ENCODE measurements at regions of chr6 and their contacts with region 1.

Region 1: DNA sequence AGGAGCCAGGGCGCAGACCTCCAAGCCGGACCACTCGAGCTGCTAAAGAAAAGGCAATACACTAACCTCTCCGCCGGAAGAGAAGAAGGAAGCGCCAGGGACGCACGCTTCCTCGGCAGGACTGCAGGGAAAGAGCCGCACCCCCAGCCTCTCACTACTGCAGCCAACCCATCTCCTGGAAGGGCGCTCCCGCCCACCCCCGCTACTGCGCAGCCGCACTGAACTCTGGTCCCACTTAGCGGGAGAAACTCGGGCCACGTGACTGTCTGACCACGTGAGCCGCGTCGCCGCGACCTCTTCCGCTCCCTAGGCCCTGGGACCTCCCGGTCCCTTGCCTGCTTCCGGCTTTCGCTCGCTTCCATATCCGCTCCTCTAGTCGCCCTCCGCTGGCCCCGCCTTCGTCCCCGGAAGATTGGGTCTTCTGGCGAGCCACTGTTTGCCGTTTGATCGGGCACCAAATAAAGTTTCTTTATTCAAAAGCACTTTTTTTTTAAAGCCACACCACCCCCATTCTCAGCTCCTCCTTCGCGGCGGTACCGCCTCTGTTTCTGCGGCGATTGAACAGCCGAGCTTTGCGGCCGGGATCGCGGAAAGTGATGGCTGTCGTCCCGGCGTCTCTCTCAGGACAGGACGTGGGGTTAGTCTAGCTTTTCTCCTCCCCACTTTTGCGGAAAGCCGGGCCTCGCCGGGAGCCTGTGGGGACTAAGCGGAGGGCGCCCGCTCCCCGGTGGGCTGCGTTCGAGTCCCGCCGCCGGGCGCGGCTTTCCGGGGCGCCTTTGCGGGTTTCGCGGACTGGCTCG is at the start of gene RMND1:
- DNase-seq: peak; percentile 98 to 100 (median 99)
- ATAC-seq: peak; percentile 95
- H3K4me3 ChIP-seq: peak within 1 kb of the TSS; percentile 74 to 81
- H3K4me3 Mint-ChIP-seq: peak within 1 kb of the TSS; percentile 92
- H3K27ac ChIP-seq: peak within 1 kb of the TSS; percentile 75 to 78
- H3K27ac Mint-ChIP-seq: peak within 1 kb of the TSS; percentile 92
- H3K4me1 ChIP-seq: peaks cover 24% of the 10 kb centered on the region
- H3K4me1 Mint-ChIP-seq: peaks cover 48% of the 10 kb centered on the region
- H3K27me3 ChIP-seq: no peaks in the 10 kb centered on the region
- H3K27me3 Mint-ChIP-seq: no peaks in the 10 kb centered on the region
- CTCF ChIP-seq: no peak
- total RNA-seq, gene RMND1: 5.8 to 6.3 TPM

Region 2: GRCh38 chr6:151370509-151371078 is 81.6 kb before region 1 on chr6:
- CTCF ChIA-PET with region 1: no interaction called
- POLR2A ChIA-PET with region 1: interaction called, 8 read pairs
- intact Hi-C with region 1: loop called (anchors 5 kb)
- DNase-seq: peak in 1 of 9 experiments; percentile 34
- ATAC-seq: no peak
- H3K4me3 ChIP-seq: no peak overlapping the region
- H3K4me3 Mint-ChIP-seq: no peak overlapping the region
- H3K27ac ChIP-seq: peak overlapping the region in 1 of 2 experiments; percentile 66
- H3K27ac Mint-ChIP-seq: peak overlapping the region; percentile 4
- H3K4me1 ChIP-seq: peaks cover 39% of the 10 kb centered on the region
- H3K4me1 Mint-ChIP-seq: peaks cover 40% of the 10 kb centered on the region
- H3K27me3 ChIP-seq: no peaks in the 10 kb centered on the region
- H3K27me3 Mint-ChIP-seq: no peaks in the 10 kb centered on the region
- CTCF ChIP-seq: no peak

Region 3: DNA sequence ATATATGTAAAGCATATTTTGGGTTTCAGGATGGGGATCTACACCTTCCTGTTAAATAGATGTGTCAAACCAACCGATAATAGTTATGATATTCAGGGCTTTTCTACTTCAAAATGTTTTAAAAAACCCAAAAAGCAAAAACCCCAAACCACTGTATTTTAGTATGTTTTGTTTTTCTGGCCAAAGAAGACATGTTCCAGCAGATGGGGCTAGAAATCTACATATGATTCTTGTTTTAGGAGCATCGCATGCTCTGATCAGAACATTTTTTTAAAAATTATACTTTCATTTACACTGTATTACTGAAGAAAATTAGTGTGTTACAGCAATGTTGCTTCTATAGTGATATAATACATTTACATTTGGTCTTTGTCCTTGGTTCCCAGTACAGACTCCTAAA is 11.2 kb before region 1 on chr6:
- CTCF ChIA-PET with region 1: interaction called, 11 read pairs
- POLR2A ChIA-PET with region 1: interaction called, 8 read pairs
- intact Hi-C with region 1: no loop called
- DNase-seq: peak in 2 of 9 experiments; percentile 55 to 67
- ATAC-seq: peak; percentile 52
- H3K4me3 ChIP-seq: no peak overlapping the region
- H3K4me3 Mint-ChIP-seq: no peak overlapping the region
- H3K27ac ChIP-seq: peak overlapping the region in 1 of 2 experiments; percentile 23
- H3K27ac Mint-ChIP-seq: no peak overlapping the region
- H3K4me1 ChIP-seq: peaks cover 16% of the 10 kb centered on the region
- H3K4me1 Mint-ChIP-seq: peaks cover 47% of the 10 kb centered on the region
- H3K27me3 ChIP-seq: no peaks in the 10 kb centered on the region
- H3K27me3 Mint-ChIP-seq: no peaks in the 10 kb centered on the region
- CTCF ChIP-seq: peak; percentile 69

Region 4: DNA sequence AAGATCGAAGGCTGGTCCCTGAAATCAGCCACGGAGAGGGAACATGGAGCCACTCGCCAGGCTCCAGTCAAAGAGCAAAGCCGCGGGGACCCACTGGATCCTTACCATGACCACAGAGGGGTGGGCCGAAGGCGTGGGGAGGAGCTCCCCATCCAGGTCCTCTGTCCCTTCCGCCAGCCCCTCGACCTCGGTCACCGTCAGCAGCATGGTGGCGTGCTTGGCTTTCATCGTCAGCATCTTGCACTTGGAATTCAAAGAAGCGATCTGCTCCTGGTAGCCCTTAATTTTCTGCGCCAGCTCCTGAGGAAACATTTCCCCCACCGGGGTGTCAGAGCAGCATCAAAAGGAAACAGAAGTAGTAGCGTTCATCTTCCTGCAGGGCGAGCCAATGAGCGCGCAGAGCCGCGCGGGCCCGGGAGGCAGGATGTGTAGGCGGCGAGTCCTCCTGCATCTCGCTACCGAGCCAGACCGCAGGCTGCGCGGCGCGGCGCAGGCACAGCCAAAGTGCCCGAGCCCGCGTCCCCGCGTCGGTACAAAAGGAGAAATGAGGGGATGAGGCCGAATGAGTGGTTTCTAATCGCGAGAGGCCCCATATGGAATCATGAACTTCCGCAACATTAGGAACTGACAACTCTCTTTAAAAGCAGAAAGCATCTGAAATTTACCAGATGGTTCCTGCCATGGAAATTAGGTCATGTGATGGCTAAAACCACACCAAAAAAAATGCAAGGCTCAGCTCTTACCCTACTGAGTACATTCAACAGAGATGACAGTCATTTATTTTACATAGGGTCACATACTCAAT is 849.8 kb after region 1 on chr6:
- CTCF ChIA-PET with region 1: no interaction called
- POLR2A ChIA-PET with region 1: no interaction called
- intact Hi-C with region 1: loop called (anchors 1 to 5 kb)
- DNase-seq: peak; percentile 71 to 94 (median 87)
- ATAC-seq: peak; percentile 97
- H3K4me3 ChIP-seq: peak overlapping the region; percentile 83 to 88
- H3K4me3 Mint-ChIP-seq: peak overlapping the region; percentile 100
- H3K27ac ChIP-seq: peak overlapping the region; percentile 82 to 85
- H3K27ac Mint-ChIP-seq: peak overlapping the region; percentile 100
- H3K4me1 ChIP-seq: peaks cover 21% of the 10 kb centered on the region
- H3K4me1 Mint-ChIP-seq: peaks cover 41% of the 10 kb centered on the region
- H3K27me3 ChIP-seq: no peaks in the 10 kb centered on the region
- H3K27me3 Mint-ChIP-seq: no peaks in the 10 kb centered on the region
- CTCF ChIP-seq: peak; percentile 77

Region 5: GRCh38 chr6:153002607-153003365 is 1550.6 kb after region 1 on chr6 and contains the start of gene MTRF1L:
- CTCF ChIA-PET with region 1: no interaction called
- POLR2A ChIA-PET with region 1: no interaction called
- intact Hi-C with region 1: loop called in 1 of 2 experiments (anchors 5 kb)
- DNase-seq: peak; percentile 58 to 94 (median 84)
- ATAC-seq: peak; percentile 85
- H3K4me3 ChIP-seq: peak within 1 kb of the TSS; percentile 60 to 69
- H3K4me3 Mint-ChIP-seq: peak within 1 kb of the TSS; percentile 97
- H3K27ac ChIP-seq: peak within 1 kb of the TSS; percentile 63 to 74
- H3K27ac Mint-ChIP-seq: peak within 1 kb of the TSS; percentile 96
- H3K4me1 ChIP-seq: peaks cover 26% of the 10 kb centered on the region
- H3K4me1 Mint-ChIP-seq: peaks cover 52% of the 10 kb centered on the region
- H3K27me3 ChIP-seq: no peaks in the 10 kb centered on the region
- H3K27me3 Mint-ChIP-seq: no peaks in the 10 kb centered on the region
- CTCF ChIP-seq: no peak
- total RNA-seq, gene MTRF1L: 10.5 to 13.4 TPM

Measured in CD8-positive, alpha-beta T cell (primary cell).